HepG2 (cell line): ENCODE measurements at regions of chr1 and their contacts with region 1.

Region 1: DNA sequence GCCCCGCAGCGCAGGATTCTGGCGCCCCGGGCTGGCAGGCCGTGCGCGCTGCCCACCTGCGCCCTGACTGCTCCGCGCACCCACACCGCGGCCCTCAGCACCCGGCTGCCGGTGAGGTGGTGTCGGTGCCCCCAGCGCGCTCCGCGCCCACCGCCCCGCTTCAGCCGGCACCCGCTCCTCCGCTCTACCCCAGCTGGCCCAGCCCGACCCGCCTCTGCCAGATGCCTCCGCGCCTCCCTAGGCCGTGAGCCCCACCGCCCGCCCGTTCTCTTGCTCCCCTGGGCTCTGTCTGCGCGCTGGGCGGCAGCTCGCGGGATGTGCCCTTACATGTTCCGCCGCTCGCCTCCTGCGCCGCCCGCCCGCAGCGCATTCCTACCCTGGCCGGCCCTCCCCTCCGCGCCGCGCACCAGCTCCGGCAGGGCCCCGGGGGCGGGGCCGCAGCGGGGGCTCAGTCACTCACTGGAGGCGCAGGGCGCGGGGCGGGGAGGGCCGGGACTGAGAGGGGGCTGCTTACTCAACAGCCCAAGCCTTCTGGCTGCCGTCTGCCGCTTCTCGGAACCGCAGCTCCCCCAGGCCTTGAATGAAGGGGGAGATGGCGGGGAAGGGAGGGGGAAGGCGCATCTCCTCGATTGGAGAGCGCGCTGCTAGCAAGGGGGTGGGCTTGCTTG is at the start of gene PHLDA3:
- DNase-seq: peak; percentile 66
- ATAC-seq: peak; percentile 92
- H3K4me3 ChIP-seq: peak within 1 kb of the TSS; percentile 70 to 96 (median 92)
- H3K27ac ChIP-seq: peak within 1 kb of the TSS; percentile 67
- H3K4me1 ChIP-seq: peaks cover 45% of the 10 kb centered on the region
- H3K27me3 ChIP-seq: peaks cover 0 to 16% of the 10 kb centered on the region in 2 experiments; a peak in 2 of 5 replicates
- CTCF ChIP-seq: peak; percentile 3; the same call in 1 of the 2 replicates
- EP300 ChIP-seq: no peak
- POLR2A ChIP-seq: peak in 1 of 2 experiments; percentile 60; a peak in 2 of 4 replicates
- RAD21 ChIP-seq: peak; percentile 27; the same call in 1 of the 2 replicates
- total RNA-seq, gene PHLDA3: 29.1 and 33.6 TPM in 2 replicates

Region 2: GRCh38 chr1:201447911-201448871 is 20.8 kb before region 1 on chr1:
- CTCF ChIA-PET with region 1: no interaction called
- POLR2A ChIA-PET with region 1: interaction called, 9 read pairs
- in situ Hi-C with region 1: no loop called
- intact Hi-C with region 1: loop called (anchors 2 kb)
- DNase-seq: peak; percentile 56
- ATAC-seq: peak; percentile 98
- H3K4me3 ChIP-seq: peak overlapping the region in 1 of 3 experiments; percentile 52; a peak in 1 of 6 replicates
- H3K27ac ChIP-seq: no peak overlapping the region
- H3K4me1 ChIP-seq: peaks cover 25% of the 10 kb centered on the region
- H3K27me3 ChIP-seq: peaks cover 4 to 17% of the 10 kb centered on the region in 2 experiments; a peak in 4 of 5 replicates
- CTCF ChIP-seq: peak; percentile 89
- EP300 ChIP-seq: no peak
- POLR2A ChIP-seq: no peak
- RAD21 ChIP-seq: peak; percentile 70

Region 3: GRCh38 chr1:201481761-201482493 is 12.9 kb after region 1 on chr1:
- CTCF ChIA-PET with region 1: no interaction called
- POLR2A ChIA-PET with region 1: interaction called, 37 read pairs
- in situ Hi-C with region 1: no loop called
- intact Hi-C with region 1: no loop called
- DNase-seq: peak; percentile 73
- ATAC-seq: peak; percentile 95
- H3K4me3 ChIP-seq: peak overlapping the region in 2 of 3 experiments; percentile 27 to 57; a peak in 2 of 6 replicates
- H3K27ac ChIP-seq: no peak overlapping the region
- H3K4me1 ChIP-seq: peaks cover 29% of the 10 kb centered on the region
- H3K27me3 ChIP-seq: peaks cover 1 to 30% of the 10 kb centered on the region in 2 experiments; a peak in 3 of 5 replicates
- CTCF ChIP-seq: peak; percentile 97
- EP300 ChIP-seq: no peak
- POLR2A ChIP-seq: no peak
- RAD21 ChIP-seq: peak; percentile 99

Region 4: GRCh38 chr1:201495471-201496295 is 26.7 kb after region 1 on chr1:
- CTCF ChIA-PET with region 1: no interaction called
- POLR2A ChIA-PET with region 1: interaction called, 12 read pairs
- in situ Hi-C with region 1: no loop called
- intact Hi-C with region 1: no loop called
- DNase-seq: peak; percentile 84
- ATAC-seq: peak; percentile 86
- H3K4me3 ChIP-seq: peak overlapping the region in 1 of 3 experiments; percentile 29; a peak in 2 of 6 replicates
- H3K27ac ChIP-seq: peak overlapping the region; percentile 83
- H3K4me1 ChIP-seq: peaks cover 60% of the 10 kb centered on the region
- H3K27me3 ChIP-seq: no peaks in the 10 kb centered on the region
- CTCF ChIP-seq: 0 out of 2 replicates have a peak, but pooled peaks have one; percentile 17
- EP300 ChIP-seq: peak in 1 of 2 experiments; percentile 72; a peak in 2 of 4 replicates
- POLR2A ChIP-seq: no peak; a peak in 1 of 4 replicates
- RAD21 ChIP-seq: no peak

Region 5: GRCh38 chr1:201501812-201502506 is 33.0 kb after region 1 on chr1:
- CTCF ChIA-PET with region 1: no interaction called
- POLR2A ChIA-PET with region 1: interaction called, 17 read pairs
- in situ Hi-C with region 1: no loop called
- intact Hi-C with region 1: no loop called
- DNase-seq: no peak
- ATAC-seq: 0 out of 3 replicates have a peak, but pooled peaks have one; percentile 3
- H3K4me3 ChIP-seq: no peak overlapping the region
- H3K27ac ChIP-seq: peak overlapping the region; percentile 43
- H3K4me1 ChIP-seq: peaks cover 82% of the 10 kb centered on the region
- H3K27me3 ChIP-seq: no peaks in the 10 kb centered on the region; a peak in 1 of 5 replicates
- CTCF ChIP-seq: no peak
- EP300 ChIP-seq: no peak
- POLR2A ChIP-seq: no peak
- RAD21 ChIP-seq: no peak